PC-3 (cell line): ENCODE measurements at regions of chr9 and their contacts with region 1.

Region 1: DNA sequence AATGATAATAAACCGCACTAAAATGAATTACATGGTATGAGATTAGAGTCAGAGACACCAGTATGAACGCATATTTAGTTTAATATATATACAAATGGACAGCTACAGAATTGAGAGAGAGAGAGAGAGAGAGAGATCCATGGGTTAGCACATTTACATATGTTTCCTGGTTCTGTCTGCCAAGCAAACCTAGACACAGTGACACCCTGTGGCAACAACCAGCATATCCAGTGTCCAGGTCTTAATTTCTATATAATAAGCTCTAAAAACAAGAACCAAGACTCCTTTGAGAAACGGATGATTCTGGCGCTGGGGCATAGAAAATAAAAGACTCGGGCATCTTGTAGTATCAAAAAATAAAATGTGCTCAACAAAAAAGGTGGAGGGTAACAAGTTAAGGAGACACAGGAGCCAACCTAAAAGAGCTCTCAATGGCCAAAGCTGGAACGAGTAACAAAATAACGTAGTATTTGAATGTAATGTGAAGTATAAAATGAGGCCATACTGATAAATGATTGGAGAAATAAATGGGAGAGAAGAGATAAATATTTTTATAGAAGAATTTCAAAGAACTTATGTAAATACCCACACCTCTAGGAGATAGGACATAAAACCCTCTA is 84.5 kb downstream of the RFX3 start:
- DNase-seq: peak; percentile 63
- ATAC-seq: peak; percentile 56
- H3K4me3 ChIP-seq: no peak overlapping the region
- H3K27ac ChIP-seq: no peak overlapping the region
- H3K4me1 ChIP-seq: no peaks in the 10 kb centered on the region
- H3K27me3 ChIP-seq: no peaks in the 10 kb centered on the region
- CTCF ChIP-seq: peak; percentile 69

Region 2: DNA sequence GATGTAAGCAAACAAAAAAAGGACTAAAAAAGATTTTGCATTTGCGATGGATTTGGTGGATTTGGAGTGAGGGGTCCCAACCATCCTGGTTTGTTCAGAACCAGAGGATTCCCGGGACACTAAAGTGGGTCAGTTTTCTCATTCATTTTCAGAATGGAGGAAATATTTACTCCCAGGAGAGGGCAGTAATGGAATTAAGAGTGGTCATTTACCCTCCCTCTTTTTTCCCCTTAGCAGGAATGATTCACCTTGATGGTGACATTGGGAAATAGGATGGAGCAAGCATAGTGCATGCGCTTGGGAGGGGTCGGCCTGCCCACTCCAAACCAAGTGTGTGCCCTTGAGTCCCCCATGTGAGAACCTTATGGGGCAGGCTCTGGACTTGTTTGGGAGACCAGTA is 433.2 kb before region 1 on chr9:
- CTCF ChIA-PET with region 1: no interaction called
- POLR2A ChIA-PET with region 1: no interaction called
- intact Hi-C with region 1: no loop called
- DNase-seq: peak; percentile 11
- ATAC-seq: no peak
- H3K4me3 ChIP-seq: no peak overlapping the region
- H3K27ac ChIP-seq: no peak overlapping the region
- H3K4me1 ChIP-seq: no peaks in the 10 kb centered on the region
- H3K27me3 ChIP-seq: peaks cover 13% of the 10 kb centered on the region; the same call in 1 of the 2 replicates
- CTCF ChIP-seq: 0 out of 2 replicates have a peak, but pooled peaks have one; percentile 10

Region 3: DNA sequence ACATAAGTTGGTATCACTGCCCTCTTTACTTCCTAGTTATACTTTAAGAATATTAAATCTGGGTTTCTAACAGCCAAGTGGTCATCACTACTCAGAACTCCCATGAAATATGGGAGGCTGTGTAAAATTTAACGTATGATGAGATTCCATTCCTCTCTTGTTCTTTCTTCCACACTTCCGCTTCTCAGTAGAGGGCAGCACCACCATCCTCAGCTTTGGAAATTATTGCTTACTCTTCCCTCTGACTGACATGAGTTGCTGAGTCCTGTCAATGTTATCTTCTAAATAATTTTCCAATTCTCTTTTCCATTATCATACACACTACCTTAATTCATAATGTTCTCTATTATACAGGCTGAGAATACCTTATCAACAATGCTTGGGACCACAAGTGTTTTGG is 109.5 kb before region 1 on chr9:
- CTCF ChIA-PET with region 1: interaction called, 13 read pairs
- POLR2A ChIA-PET with region 1: no interaction called
- intact Hi-C with region 1: loop called (anchors 2 kb)
- DNase-seq: peak; percentile 45
- ATAC-seq: no peak
- H3K4me3 ChIP-seq: no peak overlapping the region
- H3K27ac ChIP-seq: no peak overlapping the region
- H3K4me1 ChIP-seq: peaks cover 23% of the 10 kb centered on the region
- H3K27me3 ChIP-seq: no peaks in the 10 kb centered on the region
- CTCF ChIP-seq: peak; percentile 63